ENCODE measurements at regions of chr11 and their contacts with region 1.

Region 1: GRCh38 chr11:120801801-120802689 is 221.9 kb upstream of the TBCEL start:
- DNase-seq: peak; percentile 52 to 83 (median 72)
- H3K4me3 ChIP-seq: no peak overlapping the region
- H3K27ac ChIP-seq: no peak overlapping the region
- H3K27me3 ChIP-seq: no peaks in the 10 kb centered on the region
- CTCF ChIP-seq: peak; percentile 77 to 96 (median 89)

Region 2: DNA sequence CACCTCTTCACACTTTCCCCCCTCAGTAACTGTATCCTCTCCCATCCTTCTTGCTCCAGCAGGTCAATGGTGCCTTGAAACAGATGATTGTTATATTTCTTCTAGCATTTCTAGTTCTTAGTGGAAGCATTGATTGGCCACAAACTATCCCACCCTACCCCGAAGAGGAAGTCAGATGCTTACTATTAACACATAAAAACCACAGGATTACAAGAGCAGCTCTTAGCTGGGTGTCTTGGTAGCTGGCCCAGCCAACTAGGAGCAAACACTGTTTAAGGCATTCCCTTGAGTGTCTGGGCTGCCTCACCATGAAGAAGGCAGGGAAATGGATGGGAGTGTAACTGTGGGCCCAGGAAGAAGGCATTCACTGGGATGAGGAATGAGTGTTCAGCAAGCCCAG is 113.9 kb before region 1 on chr11:
- intact Hi-C with region 1: loop called in 1 of 2 experiments (anchors 5 kb)
- DNase-seq: no peak
- H3K4me3 ChIP-seq: no peak overlapping the region
- H3K27ac ChIP-seq: no peak overlapping the region
- H3K27me3 ChIP-seq: no peaks in the 10 kb centered on the region
- CTCF ChIP-seq: no peak

Region 3: DNA sequence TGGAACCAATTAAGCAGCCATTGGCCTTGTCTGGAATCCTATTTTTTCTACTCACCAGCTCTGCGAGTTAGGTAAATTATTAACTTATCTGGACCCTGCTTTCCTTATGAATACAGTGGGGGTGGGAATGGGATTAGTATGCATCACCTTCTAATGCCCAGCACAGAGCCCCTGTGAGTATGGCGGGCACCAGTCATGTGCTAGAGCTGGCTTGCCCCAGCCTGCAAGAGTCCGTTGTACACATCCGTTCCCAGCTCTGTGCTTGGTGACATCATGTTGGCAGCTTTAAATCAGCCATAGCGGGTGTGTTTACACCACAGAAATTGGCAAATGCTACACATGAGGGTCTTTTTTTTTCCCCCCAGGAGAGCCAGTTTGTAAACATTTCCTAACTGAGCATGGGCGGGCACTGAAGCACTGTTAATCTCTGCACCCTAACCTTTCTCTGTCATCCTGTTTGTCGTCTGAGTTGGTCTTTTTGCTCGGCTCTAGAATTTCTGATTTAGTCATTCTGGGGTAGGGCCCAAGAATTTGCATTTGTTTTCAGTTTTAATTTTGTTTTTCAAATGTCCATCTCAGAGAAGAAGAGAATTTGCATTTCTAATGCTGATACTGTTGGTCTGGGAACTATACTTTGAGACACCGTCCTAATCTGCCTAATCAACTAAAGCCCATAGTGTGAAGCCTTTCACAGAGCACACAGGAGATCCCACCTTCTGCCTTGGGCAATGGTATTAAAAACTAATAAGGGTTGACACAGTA is 91.6 kb after region 1 on chr11:
- intact Hi-C with region 1: no loop called
- DNase-seq: no peak
- H3K4me3 ChIP-seq: no peak overlapping the region
- H3K27ac ChIP-seq: no peak overlapping the region
- H3K27me3 ChIP-seq: no peaks in the 10 kb centered on the region
- CTCF ChIP-seq: no peak

Measured in dorsolateral prefrontal cortex (tissue), 120 donors.